Naive thymus-derived CD4-positive, alpha-beta T cell (primary cell): ENCODE measurements at regions of chr12 and their contacts with region 1.

Region 1: GRCh38 chr12:68040450-68041075 is 51.3 kb downstream of the IFNG-AS1 start:
- DNase-seq: peak; percentile 19 to 72 (median 61)
- ATAC-seq: peak; percentile 84
- H3K4me3 ChIP-seq: no peak overlapping the region
- H3K4me3 Mint-ChIP-seq: peak overlapping the region in 2 of 10 donors; percentile 13 to 33
- H3K27ac ChIP-seq: no peak overlapping the region
- H3K27ac Mint-ChIP-seq: no peak overlapping the region
- H3K4me1 ChIP-seq: peaks cover 0 to 5% of the 10 kb centered on the region in 2 donors
- H3K4me1 Mint-ChIP-seq: peaks cover 0 to 24% (median 5%) of the 10 kb centered on the region in 7 donors
- H3K27me3 ChIP-seq: no peaks in the 10 kb centered on the region
- H3K27me3 Mint-ChIP-seq: no peaks in the 10 kb centered on the region

Region 2: DNA sequence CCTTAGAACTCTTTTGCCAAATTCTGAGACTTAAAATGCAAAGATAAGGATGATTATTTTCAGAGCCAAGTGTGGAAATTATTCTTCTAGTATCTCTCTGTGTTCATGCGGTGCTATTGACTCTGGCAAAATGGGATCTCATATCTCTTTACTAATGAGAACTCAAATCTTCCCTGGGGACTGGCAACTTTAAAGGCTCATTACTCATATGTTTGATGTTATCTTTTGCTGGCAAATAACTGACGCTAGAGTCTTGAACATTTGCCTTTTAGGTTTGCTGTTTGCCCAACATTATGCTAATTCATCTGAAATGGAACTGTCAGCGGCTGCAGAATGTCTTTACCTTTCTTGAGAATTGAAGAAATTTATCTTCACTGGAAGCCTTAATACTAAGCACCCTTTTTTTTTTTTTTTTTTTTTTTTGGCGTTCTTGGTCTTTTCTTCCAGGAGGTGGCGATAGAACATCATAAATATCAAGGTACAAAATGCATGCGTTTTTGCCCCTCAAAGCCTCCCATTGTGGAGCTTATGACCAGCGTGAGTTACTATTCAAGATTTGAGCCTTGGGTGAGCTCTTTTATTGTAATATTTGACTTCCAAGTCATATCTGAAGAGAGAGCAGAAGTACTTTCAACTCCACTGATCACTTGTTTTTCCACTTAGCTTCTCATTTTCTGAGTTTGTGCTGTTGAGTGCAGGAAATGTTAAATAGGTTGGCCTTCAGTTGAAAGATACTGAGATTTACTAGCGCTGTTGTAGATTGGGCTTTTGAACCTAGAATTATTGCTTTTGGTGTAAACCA is 684.8 kb before region 1 on chr12:
- CTCF ChIA-PET with region 1: interaction called, 4 read pairs
- POLR2A ChIA-PET with region 1: no interaction called
- intact Hi-C with region 1: loop called (anchors 1 to 2 kb)
- DNase-seq: peak in 7 of 9 donors; percentile 27 to 68 (median 61)
- ATAC-seq: peak; percentile 70
- H3K4me3 ChIP-seq: no peak overlapping the region
- H3K4me3 Mint-ChIP-seq: peak overlapping the region in 7 of 10 donors; percentile 23 to 65 (median 51)
- H3K27ac ChIP-seq: no peak overlapping the region
- H3K27ac Mint-ChIP-seq: peak overlapping the region in 3 of 9 donors; percentile 42 to 63 (median 54)
- H3K4me1 ChIP-seq: peaks cover 0 to 5% of the 10 kb centered on the region in 2 donors
- H3K4me1 Mint-ChIP-seq: peaks cover 2 to 21% (median 16%) of the 10 kb centered on the region in 7 donors
- H3K27me3 ChIP-seq: no peaks in the 10 kb centered on the region
- H3K27me3 Mint-ChIP-seq: no peaks in the 10 kb centered on the region

Region 3: DNA sequence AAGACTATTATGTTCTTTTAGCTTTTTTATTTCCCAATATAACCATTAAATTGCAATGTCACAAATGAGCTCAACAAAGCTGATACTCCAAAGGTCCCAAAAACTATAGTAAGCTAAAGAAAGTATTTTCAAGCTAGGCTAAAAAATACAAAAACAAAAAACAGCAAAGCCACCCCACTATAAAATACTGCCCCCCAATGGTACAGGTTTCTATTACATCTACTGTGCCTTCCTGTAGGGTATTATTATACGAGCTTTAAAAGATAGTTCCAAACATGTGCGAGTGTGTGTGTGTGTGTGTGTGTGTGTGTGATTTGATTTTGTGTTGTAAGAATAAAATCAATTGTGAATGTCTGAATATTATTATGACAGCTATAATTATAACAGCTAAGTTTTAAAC is 117.9 kb after region 1 on chr12:
- CTCF ChIA-PET with region 1: interaction called, 7 read pairs
- POLR2A ChIA-PET with region 1: no interaction called
- intact Hi-C with region 1: loop called (anchors 1 kb)
- DNase-seq: peak in 5 of 9 donors; percentile 20 to 48 (median 23)
- ATAC-seq: peak; percentile 77
- H3K4me3 ChIP-seq: peak overlapping the region; percentile 4
- H3K4me3 Mint-ChIP-seq: peak overlapping the region in 2 of 10 donors; percentile 26 to 60
- H3K27ac ChIP-seq: no peak overlapping the region
- H3K27ac Mint-ChIP-seq: no peak overlapping the region
- H3K4me1 ChIP-seq: peaks cover 0 to 37% of the 10 kb centered on the region in 2 donors
- H3K4me1 Mint-ChIP-seq: peaks cover 0 to 30% (median 0%) of the 10 kb centered on the region in 7 donors
- H3K27me3 ChIP-seq: no peaks in the 10 kb centered on the region
- H3K27me3 Mint-ChIP-seq: peaks cover 0 to 3% (median 0%) of the 10 kb centered on the region in 5 donors

Region 4: GRCh38 chr12:68189821-68190242 is 149.3 kb after region 1 on chr12:
- CTCF ChIA-PET with region 1: no interaction called
- POLR2A ChIA-PET with region 1: no interaction called
- intact Hi-C with region 1: loop called in 1 of 2 experiments (anchors 1 kb)
- DNase-seq: peak in 7 of 9 donors; percentile 24 to 53 (median 45)
- ATAC-seq: peak; percentile 75
- H3K4me3 ChIP-seq: peak overlapping the region; percentile 12
- H3K4me3 Mint-ChIP-seq: peak overlapping the region in 8 of 10 donors; percentile 47 to 81 (median 66)
- H3K27ac ChIP-seq: no peak overlapping the region
- H3K27ac Mint-ChIP-seq: peak overlapping the region in 8 of 9 donors; percentile 52 to 88 (median 75)
- H3K4me1 ChIP-seq: peaks cover 10 to 11% of the 10 kb centered on the region in 2 donors
- H3K4me1 Mint-ChIP-seq: peaks cover 0 to 37% (median 24%) of the 10 kb centered on the region in 7 donors
- H3K27me3 ChIP-seq: no peaks in the 10 kb centered on the region
- H3K27me3 Mint-ChIP-seq: peaks cover 0 to 2% (median 0%) of the 10 kb centered on the region in 5 donors

Region 5: GRCh38 chr12:68317047-68317667 is 276.6 kb after region 1 on chr12:
- CTCF ChIA-PET with region 1: interaction called, 37 read pairs
- POLR2A ChIA-PET with region 1: no interaction called
- intact Hi-C with region 1: loop called (anchors 1 kb)
- DNase-seq: peak in 7 of 9 donors; percentile 13 to 63 (median 50)
- ATAC-seq: no peak
- H3K4me3 ChIP-seq: no peak overlapping the region
- H3K4me3 Mint-ChIP-seq: no peak overlapping the region
- H3K27ac ChIP-seq: no peak overlapping the region
- H3K27ac Mint-ChIP-seq: no peak overlapping the region
- H3K4me1 ChIP-seq: no peaks in the 10 kb centered on the region
- H3K4me1 Mint-ChIP-seq: peaks cover 0 to 5% (median 0%) of the 10 kb centered on the region in 7 donors
- H3K27me3 ChIP-seq: no peaks in the 10 kb centered on the region
- H3K27me3 Mint-ChIP-seq: no peaks in the 10 kb centered on the region

Region 6: DNA sequence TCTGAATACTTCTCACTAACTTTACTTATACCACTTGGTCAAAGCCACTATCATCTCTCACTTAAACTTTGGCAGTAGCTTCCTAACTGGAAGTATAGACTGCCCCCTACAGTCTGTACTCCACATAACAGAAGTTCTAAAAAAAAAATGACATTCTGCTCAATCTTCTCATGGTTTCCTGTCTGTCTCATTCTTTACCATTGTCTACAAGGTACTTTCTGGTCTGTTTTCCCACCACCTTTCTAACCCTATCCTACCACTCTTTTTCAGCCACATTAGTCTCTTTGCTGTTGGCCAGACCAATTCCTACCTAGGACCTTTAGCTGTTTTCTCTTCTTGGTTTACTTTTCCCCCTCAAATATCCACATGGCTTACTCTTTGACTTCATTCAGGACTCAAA is 1213.5 kb after region 1 on chr12:
- CTCF ChIA-PET with region 1: no interaction called
- POLR2A ChIA-PET with region 1: no interaction called
- intact Hi-C with region 1: loop called in 1 of 2 experiments (anchors 10 kb)
- DNase-seq: peak in 7 of 9 donors; percentile 55 to 76 (median 67)
- ATAC-seq: peak; percentile 94
- H3K4me3 ChIP-seq: no peak overlapping the region
- H3K4me3 Mint-ChIP-seq: no peak overlapping the region
- H3K27ac ChIP-seq: peak overlapping the region; percentile 33
- H3K27ac Mint-ChIP-seq: peak overlapping the region; percentile 18 to 93 (median 53)
- H3K4me1 ChIP-seq: peaks cover 0 to 4% of the 10 kb centered on the region in 2 donors
- H3K4me1 Mint-ChIP-seq: peaks cover 19 to 56% (median 54%) of the 10 kb centered on the region in 7 donors
- H3K27me3 ChIP-seq: no peaks in the 10 kb centered on the region
- H3K27me3 Mint-ChIP-seq: no peaks in the 10 kb centered on the region